ENCODE measurements at regions of chr9 and their contacts with region 1.

Region 1: DNA sequence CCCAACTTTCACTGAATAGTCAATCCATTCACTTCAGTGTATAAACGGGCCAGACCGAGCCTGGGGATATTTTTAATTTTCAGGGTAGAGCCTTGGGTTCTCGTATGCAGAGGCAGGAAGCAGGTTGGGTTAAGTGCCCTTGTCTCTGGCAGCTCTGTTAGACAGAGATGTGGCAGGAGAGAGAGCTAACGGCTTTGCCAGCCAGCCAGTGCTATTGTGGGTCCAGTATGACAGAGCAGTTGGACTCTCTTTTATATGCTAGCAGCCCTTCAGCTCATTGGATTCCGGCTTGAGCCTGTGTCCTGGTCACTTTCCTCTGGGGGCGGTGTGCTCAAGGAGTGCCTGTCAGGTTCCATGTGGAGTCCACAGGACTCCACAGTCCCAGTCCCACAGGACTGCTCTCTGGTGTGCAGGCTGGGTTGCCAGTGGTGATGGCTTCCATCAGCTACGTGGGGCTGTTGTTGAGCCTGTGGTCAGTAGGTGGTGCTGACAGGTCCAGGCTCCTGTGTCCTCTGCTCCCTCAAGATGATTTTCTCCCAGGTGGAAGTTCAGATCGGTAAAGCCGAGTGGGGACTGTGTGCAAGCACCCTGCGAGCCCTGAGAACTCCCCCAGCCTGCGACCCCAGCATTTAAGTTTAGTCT is 14.3 kb downstream of the CLTA start:
- DNase-seq: no peak
- ATAC-seq: no peak
- H3K4me3 Mint-ChIP-seq: no peak overlapping the region
- H3K27ac Mint-ChIP-seq: no peak overlapping the region
- H3K4me1 Mint-ChIP-seq: peaks cover 44% of the 10 kb centered on the region
- H3K27me3 Mint-ChIP-seq: no peaks in the 10 kb centered on the region

Region 2: GRCh38 chr9:36237230-36237629 is 32.2 kb after region 1 on chr9:
- CTCF ChIA-PET with region 1: no interaction called
- POLR2A ChIA-PET with region 1: no interaction called
- intact Hi-C with region 1: no loop called
- DNase-seq: no peak
- ATAC-seq: no peak
- H3K4me3 Mint-ChIP-seq: no peak overlapping the region
- H3K27ac Mint-ChIP-seq: no peak overlapping the region
- H3K4me1 Mint-ChIP-seq: peaks cover 2% of the 10 kb centered on the region
- H3K27me3 Mint-ChIP-seq: no peaks in the 10 kb centered on the region

Region 3: DNA sequence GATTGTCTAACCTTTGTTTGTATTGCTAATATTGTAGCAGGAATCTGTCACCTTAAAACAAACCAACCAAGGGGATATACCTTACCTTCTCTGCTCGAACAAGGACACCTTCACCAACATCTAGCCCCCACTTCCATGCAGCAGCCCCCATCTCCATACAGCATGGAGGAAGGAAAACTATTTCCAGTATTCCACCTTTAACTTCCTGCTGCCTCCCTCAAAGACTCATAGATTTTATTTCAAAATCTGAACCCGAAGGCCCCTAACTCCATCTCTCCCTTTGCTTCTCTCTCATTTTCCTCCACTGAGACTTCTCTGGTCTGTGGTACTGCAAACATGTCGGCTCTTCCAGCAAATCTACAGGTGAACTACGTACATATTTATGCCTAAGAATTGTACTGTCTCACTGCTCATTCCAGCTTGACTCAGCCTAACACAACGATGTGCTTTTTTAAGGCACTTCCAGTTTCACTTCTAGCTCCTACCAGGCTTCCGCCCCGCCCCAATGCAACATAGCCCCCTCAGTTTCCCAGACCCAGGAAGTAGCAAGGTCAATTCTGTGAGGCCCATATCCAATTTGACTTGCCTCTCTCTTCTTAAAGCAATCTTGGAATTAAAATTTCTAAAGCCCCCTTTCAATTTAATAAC is 265.7 kb after region 1 on chr9:
- CTCF ChIA-PET with region 1: no interaction called
- POLR2A ChIA-PET with region 1: interaction called, 12 read pairs
- intact Hi-C with region 1: no loop called
- DNase-seq: peak; percentile 78
- ATAC-seq: peak; percentile 97
- H3K4me3 Mint-ChIP-seq: peak overlapping the region; percentile 72
- H3K27ac Mint-ChIP-seq: peak overlapping the region; percentile 97
- H3K4me1 Mint-ChIP-seq: peaks cover 31% of the 10 kb centered on the region
- H3K27me3 Mint-ChIP-seq: no peaks in the 10 kb centered on the region